ENCODE measurements at regions of chr19 and their contacts with region 1.

Region 1: GRCh38 chr19:45103156-45103507 is 10.2 kb downstream of the PPP1R37 start:
- DNase-seq: peak in 2 of 3 donors; percentile 30 to 72
- H3K4me3 ChIP-seq: peak overlapping the region in 4 of 7 experiments; percentile 20 to 52 (median 32)
- H3K27ac ChIP-seq: no peak overlapping the region
- H3K4me1 ChIP-seq: peaks cover 0 to 38% (median 29%) of the 10 kb centered on the region in 4 experiments
- H3K27me3 ChIP-seq: no peaks in the 10 kb centered on the region

Region 2: DNA sequence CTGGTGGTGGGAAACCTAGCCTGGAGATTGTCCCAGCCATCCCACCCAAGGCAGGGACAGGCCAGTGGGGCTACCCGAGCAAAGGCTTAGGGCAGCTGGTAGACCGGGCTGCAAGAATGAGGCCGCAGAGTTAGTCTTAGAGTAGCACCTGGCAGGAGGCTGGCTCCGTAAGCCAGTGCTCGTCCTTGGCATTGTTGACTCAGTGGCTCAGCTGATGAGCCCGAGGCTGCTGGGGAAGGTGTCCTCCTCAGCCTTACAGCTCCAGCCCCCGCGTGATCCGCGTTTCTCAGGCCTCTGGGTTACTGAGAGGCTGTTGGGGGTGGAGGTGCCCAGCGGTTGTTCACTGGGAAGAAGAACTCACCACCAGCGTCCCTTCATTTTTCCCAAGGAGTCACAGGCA is 14.5 kb after region 1 on chr19:
- CTCF ChIA-PET with region 1: interaction called, 15 read pairs
- POLR2A ChIA-PET with region 1: interaction called, 3 read pairs
- DNase-seq: no peak
- H3K4me3 ChIP-seq: peak overlapping the region in 3 of 7 experiments; percentile 33 to 42 (median 40)
- H3K27ac ChIP-seq: no peak overlapping the region
- H3K4me1 ChIP-seq: peaks cover 5 to 87% (median 75%) of the 10 kb centered on the region in 4 experiments
- H3K27me3 ChIP-seq: no peaks in the 10 kb centered on the region

Region 3: DNA sequence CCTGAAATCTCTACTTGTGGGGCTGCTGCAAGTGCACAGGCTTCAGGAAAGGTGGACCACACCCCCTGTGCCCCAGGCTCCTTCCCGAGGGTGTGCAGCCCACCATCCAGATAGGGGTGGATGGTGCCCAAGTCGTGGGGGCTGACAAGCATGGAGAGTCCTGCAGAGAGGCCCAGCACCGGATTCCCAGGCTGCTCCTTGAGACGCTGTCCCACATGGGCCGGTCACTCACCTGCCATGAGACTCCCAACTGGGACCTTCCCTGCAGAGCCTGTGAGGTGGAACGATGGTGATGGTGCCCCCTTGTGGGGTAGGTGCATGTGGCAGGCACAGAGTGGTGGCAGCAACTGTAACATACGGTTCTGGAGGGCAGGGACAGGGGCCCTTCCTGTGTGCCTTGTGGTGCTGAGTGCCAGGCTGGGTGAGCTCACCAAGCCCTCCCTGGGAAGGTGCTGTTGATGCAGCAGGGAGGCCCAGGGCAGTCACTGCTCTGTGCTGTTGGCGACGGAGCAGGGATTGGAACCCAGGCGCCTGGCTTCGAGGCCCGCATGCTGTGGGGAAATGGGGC is 22.9 kb after region 1 on chr19:
- CTCF ChIA-PET with region 1: interaction called, 16 read pairs
- POLR2A ChIA-PET with region 1: no interaction called
- DNase-seq: peak; percentile 59 to 79 (median 72)
- H3K4me3 ChIP-seq: no peak overlapping the region
- H3K27ac ChIP-seq: no peak overlapping the region
- H3K4me1 ChIP-seq: peaks cover 0 to 25% (median 22%) of the 10 kb centered on the region in 4 experiments
- H3K27me3 ChIP-seq: no peaks in the 10 kb centered on the region

Region 4: DNA sequence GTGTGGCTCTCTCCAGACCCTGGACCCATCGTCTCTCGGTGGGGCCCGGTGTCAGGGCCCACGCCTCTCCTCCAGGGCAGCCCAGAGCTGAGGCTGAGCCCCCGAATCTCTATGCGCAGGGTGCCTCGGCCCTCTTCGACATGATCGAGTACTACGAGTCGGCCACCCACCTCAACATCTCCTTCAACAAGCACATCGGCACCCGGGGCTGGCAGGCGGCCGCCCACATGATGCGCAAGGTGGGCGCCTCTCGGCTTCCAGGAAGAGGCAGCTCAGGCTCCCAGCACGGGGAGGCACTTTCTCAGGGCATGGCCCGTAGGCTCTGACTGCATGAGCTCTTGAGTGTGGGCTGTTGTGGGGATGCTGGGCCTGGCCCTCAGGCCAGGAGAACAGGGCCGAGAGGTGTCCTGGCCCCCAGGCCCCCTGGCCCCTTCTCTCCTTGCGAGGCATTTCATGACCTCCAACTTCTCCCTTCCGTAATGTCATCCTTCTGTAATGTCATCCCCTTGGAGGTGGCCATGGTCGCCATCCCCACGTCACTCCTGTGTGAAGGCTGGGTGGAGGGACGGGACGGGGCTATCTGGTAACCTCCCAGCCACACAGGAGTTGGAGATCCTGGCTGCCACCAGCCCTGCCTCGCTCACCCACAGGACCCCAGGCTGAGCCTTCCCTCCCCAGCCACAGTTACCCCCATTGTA is 38.2 kb after region 1 on chr19:
- CTCF ChIA-PET with region 1: no interaction called
- POLR2A ChIA-PET with region 1: no interaction called
- DNase-seq: no peak
- H3K4me3 ChIP-seq: no peak overlapping the region
- H3K27ac ChIP-seq: no peak overlapping the region
- H3K4me1 ChIP-seq: peaks cover 0 to 3% (median 0%) of the 10 kb centered on the region in 4 experiments
- H3K27me3 ChIP-seq: no peaks in the 10 kb centered on the region